ENCODE measurements at regions of chr4 and their contacts with region 1.

Region 1: DNA sequence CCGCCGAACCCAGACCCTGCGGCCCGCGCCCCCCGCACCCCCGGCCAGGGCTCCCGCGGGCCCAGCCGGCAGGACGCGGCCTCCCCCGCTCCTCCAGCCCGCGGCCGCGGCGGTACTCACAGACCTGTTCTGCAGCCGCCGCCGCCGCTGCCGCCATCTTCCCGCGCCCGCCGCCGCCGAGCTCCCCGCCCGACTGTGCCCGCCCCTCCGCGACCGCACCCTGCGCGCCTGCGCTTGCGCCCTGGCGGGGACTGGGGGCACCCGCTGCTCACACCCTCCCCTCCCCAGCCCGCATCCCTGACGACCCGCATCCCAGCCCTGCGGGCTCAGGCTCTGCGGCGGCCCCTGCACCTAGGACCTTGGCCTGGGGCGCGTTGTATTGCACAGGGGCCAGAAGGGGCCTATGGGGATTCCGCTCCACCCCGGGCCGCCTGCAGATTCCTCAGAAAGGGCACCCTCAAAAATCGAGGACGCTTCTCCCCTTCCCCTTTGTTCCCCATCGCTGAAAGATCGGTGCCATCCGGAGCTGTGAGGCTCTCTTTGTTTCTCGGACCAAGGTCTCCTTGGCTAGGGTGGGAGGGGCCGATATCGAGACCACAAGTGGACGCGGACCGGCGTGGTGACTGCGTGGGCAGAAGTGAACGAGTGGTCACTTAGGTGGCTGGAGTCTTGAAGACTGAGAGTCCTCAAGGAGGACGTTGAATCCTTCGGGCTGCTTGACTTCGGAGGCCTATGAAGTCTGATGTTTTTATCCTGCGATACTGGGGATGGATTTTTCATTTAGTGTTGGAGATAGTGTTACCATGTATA is at the start of gene SGCB:
- DNase-seq: peak; percentile 71
- H3K4me3 Mint-ChIP-seq: peak within 1 kb of the TSS; percentile 86
- H3K27ac Mint-ChIP-seq: peak within 1 kb of the TSS; percentile 63
- H3K4me1 Mint-ChIP-seq: peaks cover 27% of the 10 kb centered on the region
- H3K27me3 Mint-ChIP-seq: peaks cover 17% of the 10 kb centered on the region
- total RNA-seq, gene SGCB: 13.9 and 14.4 TPM in 2 replicates

Region 2: DNA sequence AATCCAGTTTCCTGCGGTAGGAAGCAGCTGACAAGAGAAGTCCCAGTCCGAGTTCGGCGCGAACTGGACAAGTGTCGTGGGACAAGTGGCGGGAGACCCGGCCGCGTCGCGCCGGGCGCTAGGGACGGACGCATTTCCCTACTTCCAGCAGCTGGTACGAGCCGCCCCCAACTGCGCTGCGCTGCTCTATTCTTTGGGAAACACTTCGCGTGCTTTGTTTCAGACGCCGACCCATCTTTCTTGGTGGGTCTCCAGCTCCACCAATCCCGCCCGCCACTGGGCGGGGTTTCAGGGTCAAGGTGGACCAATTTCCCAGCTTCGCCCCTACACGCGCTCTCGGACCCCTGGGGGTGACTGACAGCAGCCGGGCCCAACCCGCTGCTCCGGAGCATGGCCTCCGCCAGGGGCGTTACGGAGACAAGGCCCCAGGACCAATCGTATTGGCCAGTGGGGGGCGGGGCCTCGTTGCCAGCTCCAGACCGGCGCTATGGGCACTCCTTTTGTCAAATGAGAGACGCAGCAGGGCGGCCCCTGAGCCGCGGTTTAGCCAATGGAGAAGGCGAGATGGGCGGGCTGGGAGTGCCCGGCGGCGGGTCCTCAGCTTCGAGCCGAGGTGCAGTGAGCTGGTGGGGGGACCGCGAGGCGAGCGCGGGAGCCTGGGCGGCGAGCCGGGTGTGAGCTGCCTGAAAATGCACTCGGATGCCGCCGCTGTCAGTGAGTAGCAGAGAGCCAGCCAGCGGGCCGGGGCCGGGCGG is 195.6 kb before region 1 on chr4 and contains the start of gene DCUN1D4:
- intact Hi-C with region 1: loop called (anchors 1 kb)
- DNase-seq: peak; percentile 98
- H3K4me3 Mint-ChIP-seq: peak within 1 kb of the TSS; percentile 95
- H3K27ac Mint-ChIP-seq: peak within 1 kb of the TSS; percentile 98
- H3K4me1 Mint-ChIP-seq: peaks cover 21% of the 10 kb centered on the region
- H3K27me3 Mint-ChIP-seq: peaks cover 9% of the 10 kb centered on the region
- total RNA-seq, gene DCUN1D4: 29.7 and 40.7 TPM in 2 replicates

Region 3: DNA sequence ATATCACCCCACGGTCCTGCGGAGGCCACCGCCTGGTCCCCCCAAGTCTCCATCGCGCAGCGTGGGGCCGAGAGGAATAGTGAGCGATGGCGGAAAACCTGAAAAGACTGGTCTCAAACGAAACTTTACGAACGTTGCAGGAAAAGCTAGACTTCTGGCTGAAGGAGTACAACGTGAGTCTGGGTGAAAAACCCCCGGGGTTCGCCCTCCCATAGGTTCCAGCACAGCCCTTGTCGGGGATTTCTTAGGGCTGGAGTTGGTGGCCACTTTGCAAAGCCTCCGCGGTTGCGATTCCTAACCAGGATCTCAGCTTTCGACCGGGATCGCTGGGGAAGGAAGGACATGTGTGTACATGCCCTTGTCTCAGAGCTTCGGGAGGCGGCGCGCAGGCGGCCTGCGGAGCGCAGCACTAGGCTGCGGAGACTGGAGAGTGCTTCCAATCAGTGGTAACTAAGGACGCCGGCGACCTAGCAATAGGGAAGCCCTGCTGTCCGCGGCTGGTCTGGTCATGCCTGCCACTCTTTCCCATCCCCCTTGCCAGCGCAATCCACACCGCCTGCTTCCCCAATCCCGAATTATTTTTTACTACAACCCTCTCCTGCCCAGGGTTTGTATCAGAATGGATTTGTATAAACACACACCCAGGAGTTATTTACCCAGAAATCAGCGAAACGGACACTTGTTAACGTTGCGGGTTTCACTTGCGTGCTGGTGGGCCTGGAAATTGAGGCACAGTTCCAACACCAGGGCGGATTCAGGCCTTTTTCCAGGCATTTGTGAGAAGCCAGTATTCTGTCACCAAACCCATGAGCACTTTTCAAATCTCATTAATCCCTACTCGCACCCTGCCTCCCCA is 13.5 kb after region 1 on chr4:
- intact Hi-C with region 1: loop called (anchors 2 kb)
- DNase-seq: no peak
- H3K4me3 Mint-ChIP-seq: peak overlapping the region; percentile 70
- H3K27ac Mint-ChIP-seq: no peak overlapping the region
- H3K4me1 Mint-ChIP-seq: peaks cover 9% of the 10 kb centered on the region
- H3K27me3 Mint-ChIP-seq: peaks cover 73% of the 10 kb centered on the region

Region 4: GRCh38 chr4:52721968-52722815 is 683.9 kb after region 1 on chr4:
- intact Hi-C with region 1: loop called (anchors 10 kb)
- DNase-seq: peak; percentile 84
- H3K4me3 Mint-ChIP-seq: peak overlapping the region; percentile 80
- H3K27ac Mint-ChIP-seq: peak overlapping the region; percentile 68
- H3K4me1 Mint-ChIP-seq: peaks cover 16% of the 10 kb centered on the region
- H3K27me3 Mint-ChIP-seq: peaks cover 10% of the 10 kb centered on the region